ENCODE measurements at regions of chr19 and their contacts with region 1.

Region 1: DNA sequence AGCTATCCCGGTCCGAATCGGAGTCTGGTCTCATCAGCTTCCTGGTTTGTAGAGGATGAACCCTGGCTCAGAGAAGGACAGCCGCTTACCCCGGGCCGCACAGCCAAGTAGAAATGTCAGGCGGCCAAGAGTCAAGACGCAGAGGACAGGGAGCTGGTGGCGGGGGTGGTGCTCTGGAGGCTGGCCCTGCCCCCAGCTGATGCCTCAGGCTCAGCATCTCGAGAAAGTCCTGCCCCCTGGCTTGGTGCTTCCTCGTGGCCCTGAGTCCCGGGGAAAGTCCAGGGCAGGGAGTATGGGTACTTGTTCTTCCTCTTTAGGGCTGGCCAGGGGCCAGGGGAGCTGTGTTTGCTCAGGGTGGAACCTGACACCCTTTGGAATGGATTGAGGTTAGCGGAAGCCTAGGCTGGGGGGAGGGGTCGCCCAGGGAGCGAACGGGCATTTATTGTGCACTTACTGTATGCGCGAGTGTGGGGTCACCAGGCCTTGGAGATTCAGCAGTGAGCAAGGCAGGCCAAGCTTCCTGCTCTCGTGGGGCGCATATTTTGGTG is 2.2 kb downstream of the TJP3 start:
- DNase-seq: peak; percentile 59 to 89 (median 87)
- ATAC-seq: peak in 3 of 4 donors; percentile 64 to 79 (median 72)
- H3K4me3 ChIP-seq: no peak overlapping the region
- H3K27ac ChIP-seq: no peak overlapping the region
- H3K4me1 ChIP-seq: peaks cover 0 to 19% (median 2%) of the 10 kb centered on the region in 12 donors
- H3K27me3 ChIP-seq: peaks cover 0 to 27% (median 0%) of the 10 kb centered on the region in 9 donors
- CTCF ChIP-seq: no peak
- POLR2A ChIP-seq: no peak

Region 2: DNA sequence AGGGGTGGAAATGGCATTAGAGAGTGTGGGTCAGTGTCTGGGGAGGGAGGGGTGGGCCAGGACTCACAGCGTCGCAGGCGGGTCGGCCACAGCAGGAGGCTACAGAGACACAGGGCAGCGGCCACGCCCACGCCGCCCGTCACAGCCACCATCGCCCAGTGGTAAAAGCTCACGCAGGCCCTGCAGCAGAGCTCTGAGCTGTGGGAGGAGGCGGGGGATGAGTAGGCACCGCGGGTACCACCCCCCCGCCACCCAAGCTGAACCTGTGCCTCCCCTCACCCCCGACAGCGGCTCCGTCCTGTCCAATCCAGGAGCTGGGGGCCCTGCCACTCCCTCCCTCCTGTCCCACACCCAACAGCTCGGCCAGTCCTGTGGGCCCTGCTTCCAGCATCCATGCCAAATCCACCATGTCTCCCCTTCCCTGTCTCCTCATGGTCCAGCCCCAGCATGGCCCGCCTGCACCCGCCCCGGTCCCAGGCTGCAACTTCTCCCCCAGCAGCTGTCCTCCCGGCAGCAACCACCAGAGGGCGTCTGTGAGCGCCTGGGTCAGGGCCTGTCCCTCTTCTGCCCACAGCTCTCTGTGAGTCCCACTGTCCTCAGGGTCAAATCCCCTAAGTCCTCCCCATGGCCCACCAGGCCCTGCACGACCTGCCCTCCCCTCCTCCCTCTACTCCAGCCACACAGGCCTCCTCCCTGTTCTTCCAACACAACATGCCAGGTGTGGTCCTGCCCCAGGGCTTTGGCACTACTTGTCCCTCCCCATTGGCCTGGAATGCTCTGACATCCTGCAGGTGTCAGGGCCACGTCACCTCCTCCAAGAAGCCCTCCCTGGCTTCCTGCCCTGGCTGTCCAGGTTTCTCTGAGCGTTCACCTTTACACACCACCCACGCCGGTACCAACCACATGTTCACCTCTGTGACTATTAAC is 165.3 kb before region 1 on chr19:
- intact Hi-C with region 1: loop called in 3 of 10 experiments (anchors 5 to 10 kb)
- DNase-seq: peak; percentile 62 to 87 (median 68)
- ATAC-seq: peak; percentile 18 to 69 (median 62)
- H3K4me3 ChIP-seq: no peak overlapping the region
- H3K27ac ChIP-seq: no peak overlapping the region
- H3K4me1 ChIP-seq: peaks cover 0 to 9% (median 0%) of the 10 kb centered on the region in 12 donors
- H3K27me3 ChIP-seq: no peaks in the 10 kb centered on the region
- CTCF ChIP-seq: peak; percentile 74 to 97 (median 90)
- POLR2A ChIP-seq: no peak

Region 3: GRCh38 chr19:3743486-3743885 is 33.1 kb after region 1 on chr19:
- intact Hi-C with region 1: no loop called
- DNase-seq: no peak
- ATAC-seq: no peak
- H3K4me3 ChIP-seq: no peak overlapping the region
- H3K27ac ChIP-seq: no peak overlapping the region
- H3K4me1 ChIP-seq: no peaks in the 10 kb centered on the region
- H3K27me3 ChIP-seq: peaks cover 0 to 4% (median 0%) of the 10 kb centered on the region in 9 donors
- CTCF ChIP-seq: no peak
- POLR2A ChIP-seq: no peak